Activated CD4-positive, alpha-beta memory T cell treated with anti-CD3 and anti-CD28 coated beads, Interleukin-2, amount 10 ng/mL, durations not matched to agents 7 days and 5 days (primary cell): ENCODE measurements at regions of chr17 and their contacts with region 1.

Region 1: GRCh38 chr17:43878260-43879175 is 28.8 kb downstream of the MPP2 start:
- DNase-seq: peak; percentile 66
- H3K4me3 Mint-ChIP-seq: no peak overlapping the region
- H3K27ac Mint-ChIP-seq: no peak overlapping the region
- H3K4me1 Mint-ChIP-seq: no peaks in the 10 kb centered on the region
- H3K27me3 Mint-ChIP-seq: peaks cover 2% of the 10 kb centered on the region

Region 2: DNA sequence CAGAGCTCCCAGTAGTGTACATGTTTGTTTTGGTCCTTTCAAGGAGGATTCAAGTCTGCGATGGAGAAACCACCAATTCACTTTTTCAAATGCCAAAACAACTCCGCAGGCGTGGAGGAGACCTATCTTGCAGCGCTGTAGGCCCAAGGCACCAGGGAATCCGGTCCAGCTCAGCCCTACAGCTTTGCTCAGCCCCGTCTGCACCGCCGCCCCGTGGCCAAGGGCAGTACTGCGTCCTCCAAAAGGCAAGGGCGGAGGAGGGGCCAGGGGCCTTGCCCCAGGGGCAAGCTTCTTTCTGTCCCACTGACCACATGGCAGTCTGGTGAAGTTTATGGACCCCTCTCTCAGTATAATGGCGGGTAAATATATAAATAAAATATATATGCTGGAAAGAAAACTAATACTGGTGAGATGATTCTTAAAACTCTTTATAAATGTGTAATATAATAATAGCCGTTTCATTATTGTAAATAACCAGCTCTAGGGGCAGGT is 32.3 kb before region 1 on chr17:
- CTCF ChIA-PET with region 1: interaction called, 11 read pairs
- POLR2A ChIA-PET with region 1: no interaction called
- DNase-seq: peak; percentile 76
- H3K4me3 Mint-ChIP-seq: no peak overlapping the region
- H3K27ac Mint-ChIP-seq: no peak overlapping the region
- H3K4me1 Mint-ChIP-seq: no peaks in the 10 kb centered on the region
- H3K27me3 Mint-ChIP-seq: peaks cover 18% of the 10 kb centered on the region

Region 3: DNA sequence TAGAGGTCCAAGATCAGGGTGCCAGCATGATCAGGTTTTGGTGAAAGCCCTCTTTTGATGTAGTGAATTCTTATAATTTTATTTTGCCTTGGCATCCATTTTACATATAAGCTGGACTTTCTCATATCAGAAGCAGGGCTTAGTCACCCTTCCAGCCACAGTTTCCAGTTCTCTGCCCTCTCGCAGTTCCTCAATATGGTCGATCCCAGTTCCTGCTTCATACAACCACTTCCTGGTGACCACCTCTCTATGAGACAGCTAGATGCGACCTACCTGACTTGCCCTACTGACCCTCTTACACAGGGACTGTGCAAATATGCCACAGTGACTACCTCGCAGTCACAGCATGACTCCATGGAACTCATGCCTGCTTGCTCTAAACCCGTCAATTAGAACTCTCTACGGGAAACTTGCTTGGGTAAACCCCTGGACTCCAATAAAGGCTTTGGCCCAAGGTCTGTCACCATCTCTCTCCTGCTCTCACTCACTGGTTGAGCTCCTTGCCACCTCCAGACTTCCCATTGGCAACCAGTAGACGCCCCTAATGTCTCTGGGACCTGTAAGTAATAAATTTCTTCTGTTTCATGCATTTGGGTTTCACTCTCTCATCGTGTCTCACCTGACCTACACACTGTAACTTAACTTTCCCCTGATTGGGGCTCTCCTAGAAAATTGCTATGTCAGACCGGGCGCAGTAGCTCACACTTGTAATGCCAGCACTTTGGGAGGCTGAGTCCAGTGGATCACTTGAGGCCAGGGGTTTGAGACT is 10.1 kb before region 1 on chr17:
- CTCF ChIA-PET with region 1: interaction called, 17 read pairs
- POLR2A ChIA-PET with region 1: no interaction called
- DNase-seq: no peak
- H3K4me3 Mint-ChIP-seq: no peak overlapping the region
- H3K27ac Mint-ChIP-seq: no peak overlapping the region
- H3K4me1 Mint-ChIP-seq: no peaks in the 10 kb centered on the region
- H3K27me3 Mint-ChIP-seq: peaks cover 26% of the 10 kb centered on the region

Region 4: DNA sequence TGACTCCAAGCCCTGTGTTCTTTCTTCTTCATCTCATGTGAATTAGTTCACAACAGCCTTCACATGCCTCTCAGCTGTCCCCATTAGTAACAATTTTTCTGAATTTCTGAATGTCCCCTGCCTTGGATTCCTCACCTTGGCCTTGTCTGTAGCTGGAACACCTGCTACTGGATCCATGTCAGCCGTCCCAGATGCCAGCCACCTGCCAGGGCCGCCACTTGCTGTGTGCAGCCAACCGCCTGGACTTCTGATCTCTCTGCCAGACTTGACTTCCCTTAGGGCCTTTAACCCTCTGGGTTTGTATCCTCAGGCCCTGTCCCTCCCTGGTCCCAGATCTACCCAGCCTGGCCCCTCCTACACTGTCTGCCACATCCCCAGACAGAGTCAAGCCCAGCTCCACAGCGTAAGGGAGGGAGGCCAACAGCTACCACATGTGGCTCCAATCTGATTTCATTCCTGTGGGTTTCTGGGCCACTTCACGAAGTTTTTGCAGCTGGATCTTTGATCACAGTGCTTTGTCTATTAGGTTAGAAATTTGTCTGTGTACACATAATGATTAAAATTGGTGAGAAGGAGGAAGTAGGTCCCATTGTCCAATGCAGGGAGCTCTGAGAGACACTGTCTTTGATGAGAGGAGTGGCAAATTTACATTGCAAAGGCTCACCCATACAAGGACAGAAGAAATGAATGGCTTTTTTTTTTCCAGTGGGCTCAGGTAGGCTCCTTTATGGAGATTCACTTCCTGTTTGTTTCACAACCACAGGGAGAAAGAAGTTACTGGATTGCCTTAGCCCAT is 13.5 kb after region 1 on chr17:
- CTCF ChIA-PET with region 1: interaction called, 13 read pairs
- POLR2A ChIA-PET with region 1: no interaction called
- DNase-seq: no peak
- H3K4me3 Mint-ChIP-seq: no peak overlapping the region
- H3K27ac Mint-ChIP-seq: no peak overlapping the region
- H3K4me1 Mint-ChIP-seq: no peaks in the 10 kb centered on the region
- H3K27me3 Mint-ChIP-seq: peaks cover 14% of the 10 kb centered on the region

Region 5: DNA sequence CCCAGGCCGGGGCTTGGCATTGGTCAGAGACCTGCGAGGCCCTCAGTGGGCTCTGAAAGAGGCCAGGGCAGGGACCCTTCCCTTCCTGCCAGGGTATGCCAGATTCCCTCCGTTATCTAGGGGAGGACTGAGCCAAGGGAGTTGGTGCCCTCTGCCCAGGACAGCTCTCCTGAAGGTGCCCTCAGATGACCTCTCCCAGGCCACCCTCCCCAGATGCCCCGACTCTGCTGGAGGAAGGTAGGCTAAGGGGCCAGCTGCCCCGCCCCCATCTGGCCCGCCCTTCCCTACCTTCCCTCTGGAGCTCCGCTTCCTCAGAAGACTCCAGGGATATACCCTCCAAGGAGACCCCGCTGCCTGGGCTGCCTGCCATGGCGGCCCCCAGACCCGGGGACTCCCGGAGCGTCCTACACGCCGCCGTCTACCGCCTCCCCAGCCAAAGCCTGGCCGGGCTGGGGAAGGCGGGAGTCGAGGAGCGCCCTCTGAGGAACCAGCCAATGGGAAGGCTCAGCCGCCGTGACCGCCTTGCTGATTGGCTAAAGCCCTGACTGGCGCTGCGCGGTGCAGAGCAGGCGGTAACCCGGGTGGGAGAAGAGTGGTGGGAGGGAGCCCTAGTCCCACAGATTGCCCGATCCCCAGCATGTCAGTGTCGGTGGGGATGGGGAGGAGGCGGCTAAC is 21.8 kb after region 1 on chr17:
- CTCF ChIA-PET with region 1: interaction called, 16 read pairs
- POLR2A ChIA-PET with region 1: no interaction called
- DNase-seq: peak; percentile 86
- H3K4me3 Mint-ChIP-seq: peak overlapping the region; percentile 66
- H3K27ac Mint-ChIP-seq: no peak overlapping the region
- H3K4me1 Mint-ChIP-seq: peaks cover 13% of the 10 kb centered on the region
- H3K27me3 Mint-ChIP-seq: peaks cover 40% of the 10 kb centered on the region